Panc1 (cell line): ENCODE measurements at regions of chr1 and their contacts with region 1.

Region 1: DNA sequence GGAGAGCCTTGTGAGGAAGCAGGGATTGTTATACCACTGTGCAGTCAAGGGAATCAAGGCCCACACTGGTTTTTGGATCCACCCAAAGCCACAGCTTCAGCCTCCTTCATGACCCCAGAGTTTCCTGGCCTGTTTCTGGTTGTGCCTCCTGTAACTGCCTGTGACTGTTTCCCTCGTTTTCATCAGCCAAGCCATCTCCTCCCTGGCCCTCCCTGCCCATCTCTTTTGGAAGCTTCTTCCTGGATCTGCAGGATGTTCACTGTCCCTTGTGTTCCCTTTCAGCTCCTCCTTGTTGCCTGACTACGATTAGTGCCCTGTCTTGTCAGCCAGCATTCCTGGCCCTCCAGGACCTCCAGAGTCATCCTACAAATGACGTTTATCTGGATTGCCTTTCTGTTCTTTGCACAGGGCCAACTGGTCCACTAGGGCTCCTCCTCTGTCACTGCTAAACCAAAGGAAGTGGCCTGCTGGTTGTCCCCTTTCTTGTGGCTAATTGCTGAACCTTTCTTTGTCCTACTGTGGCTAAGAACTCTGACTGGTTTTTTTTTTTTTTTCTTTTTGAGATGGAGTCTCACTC is 17.9 kb downstream of the SFT2D2 start:
- DNase-seq: no peak
- ATAC-seq: no peak
- H3K4me3 ChIP-seq: no peak overlapping the region
- H3K27ac ChIP-seq: no peak overlapping the region
- H3K4me1 ChIP-seq: no peaks in the 10 kb centered on the region
- H3K27me3 ChIP-seq: no peaks in the 10 kb centered on the region
- CTCF ChIP-seq: no peak

Region 2: GRCh38 chr1:168227620-168228019 is 16.1 kb before region 1 on chr1:
- CTCF ChIA-PET with region 1: interaction called, 12 read pairs
- POLR2A ChIA-PET with region 1: no interaction called
- in situ Hi-C with region 1: no loop called
- intact Hi-C with region 1: no loop called
- DNase-seq: no peak
- ATAC-seq: no peak
- H3K4me3 ChIP-seq: peak overlapping the region; percentile 85
- H3K27ac ChIP-seq: peak overlapping the region; percentile 62
- H3K4me1 ChIP-seq: peaks cover 27% of the 10 kb centered on the region
- H3K27me3 ChIP-seq: no peaks in the 10 kb centered on the region
- CTCF ChIP-seq: no peak